SK-N-SH (cell line): ENCODE measurements at regions of chr9 and their contacts with region 1.

Region 1: DNA sequence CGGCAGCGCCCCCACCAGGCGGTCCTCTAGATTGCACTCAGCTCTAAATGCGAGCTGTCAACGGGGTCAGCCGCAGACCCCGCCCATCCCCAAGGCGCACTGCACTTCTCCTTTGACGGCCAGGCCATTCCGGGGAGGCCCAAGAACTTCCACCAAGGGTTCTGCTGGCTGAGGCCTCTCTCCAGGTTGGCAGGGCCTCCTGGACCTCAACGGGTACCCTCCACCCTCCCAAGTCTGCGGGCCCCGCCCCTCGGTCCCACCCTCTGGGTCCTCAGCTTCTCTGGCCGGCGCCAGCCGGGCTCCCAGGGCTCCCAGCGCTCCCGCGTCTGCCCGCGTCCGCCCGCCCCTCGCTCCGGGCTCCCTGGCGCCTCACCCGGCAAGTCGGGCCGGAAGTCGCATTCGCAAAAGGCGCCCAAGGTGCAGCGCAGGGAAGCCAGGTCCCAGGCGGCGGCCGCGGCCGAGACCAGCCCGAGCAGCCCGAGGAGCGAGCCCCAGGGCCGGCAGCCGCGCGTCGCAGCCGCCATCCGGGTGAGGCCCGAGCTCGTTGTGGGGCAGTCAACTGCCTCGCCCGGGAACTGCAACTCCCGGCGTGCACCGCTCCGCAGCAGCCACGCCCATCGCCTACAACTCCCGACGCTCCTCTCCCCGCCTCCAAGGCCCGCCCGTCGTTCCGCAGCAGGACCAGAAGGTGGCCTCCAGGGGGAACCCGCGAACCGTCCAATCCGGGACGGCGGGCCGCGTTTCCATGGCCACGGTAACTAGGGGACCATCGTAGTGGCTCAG is at the start of gene TOR2A:
- DNase-seq: peak; percentile 98
- H3K4me3 ChIP-seq: peak within 1 kb of the TSS; percentile 79
- H3K27ac ChIP-seq: peak within 1 kb of the TSS; percentile 62 to 93
- H3K4me1 ChIP-seq: peaks cover 5 to 11% of the 10 kb centered on the region in 2 experiments; a peak in 1 of 4 replicates
- H3K27me3 ChIP-seq: no peaks in the 10 kb centered on the region
- CTCF ChIP-seq: peak; percentile 95
- EP300 ChIP-seq: peak in 1 of 2 experiments; percentile 47; a peak in 1 of 4 replicates
- RAD21 ChIP-seq: peak; percentile 97
- polyA plus RNA-seq, gene TOR2A: 11.9 and 17.2 TPM in 2 replicates

Region 2: GRCh38 chr9:127423934-127424675 is 310.8 kb before region 1 on chr9 and contains the start of gene ZNF79:
- CTCF ChIA-PET with region 1: no interaction called
- POLR2A ChIA-PET with region 1: no interaction called
- DNase-seq: peak; percentile 95
- H3K4me3 ChIP-seq: peak within 1 kb of the TSS; percentile 90 to 97
- H3K27ac ChIP-seq: peak within 1 kb of the TSS; percentile 82 to 98
- H3K4me1 ChIP-seq: peaks cover 7 to 18% of the 10 kb centered on the region in 2 experiments; a peak in 3 of 4 replicates
- H3K27me3 ChIP-seq: no peaks in the 10 kb centered on the region
- CTCF ChIP-seq: no peak
- EP300 ChIP-seq: no peak
- RAD21 ChIP-seq: no peak; the same call in 1 of the 2 replicates
- polyA plus RNA-seq, gene ZNF79: 4.6 and 5.9 TPM in 2 replicates

Region 3: DNA sequence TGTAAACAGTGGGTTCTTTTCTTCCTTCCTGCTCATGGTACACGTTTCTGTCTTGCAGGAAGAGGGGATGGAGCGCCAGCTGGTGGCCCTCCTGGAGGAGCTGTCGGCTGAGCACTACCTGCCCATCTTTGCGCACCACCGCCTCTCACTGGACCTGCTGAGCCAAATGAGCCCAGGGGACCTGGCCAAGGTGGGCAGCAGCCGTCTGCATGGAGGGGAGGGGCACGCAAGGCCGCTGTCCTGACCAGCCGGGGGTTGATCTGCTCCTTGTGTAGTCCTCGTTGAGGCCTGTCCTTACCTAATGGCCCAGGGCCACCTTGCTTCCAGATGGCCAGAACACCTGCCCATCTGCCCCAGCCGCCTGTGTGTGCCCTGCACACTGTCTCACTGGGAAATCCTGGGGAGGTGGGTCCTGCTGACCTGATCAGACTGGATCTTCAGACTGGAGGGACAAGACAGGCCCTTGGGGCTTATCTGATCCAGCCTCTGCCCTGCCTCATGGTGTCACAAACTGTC is 239.0 kb before region 1 on chr9:
- CTCF ChIA-PET with region 1: interaction called, 12 read pairs
- POLR2A ChIA-PET with region 1: no interaction called
- DNase-seq: no peak
- H3K4me3 ChIP-seq: no peak overlapping the region
- H3K27ac ChIP-seq: peak overlapping the region; percentile 68 to 75
- H3K4me1 ChIP-seq: peaks cover 11 to 26% of the 10 kb centered on the region in 2 experiments; a peak in 2 of 4 replicates
- H3K27me3 ChIP-seq: no peaks in the 10 kb centered on the region
- CTCF ChIP-seq: no peak
- EP300 ChIP-seq: no peak
- RAD21 ChIP-seq: peak; percentile 11; the same call in 1 of the 2 replicates

Region 4: GRCh38 chr9:127586537-127586936 is 148.4 kb before region 1 on chr9:
- CTCF ChIA-PET with region 1: interaction called, 226 read pairs
- POLR2A ChIA-PET with region 1: interaction called, 6 read pairs
- DNase-seq: peak; percentile 87
- H3K4me3 ChIP-seq: no peak overlapping the region; a peak in 1 of 4 replicates
- H3K27ac ChIP-seq: no peak overlapping the region
- H3K4me1 ChIP-seq: no peaks in the 10 kb centered on the region; a peak in 1 of 4 replicates
- H3K27me3 ChIP-seq: no peaks in the 10 kb centered on the region
- CTCF ChIP-seq: peak; percentile 87
- EP300 ChIP-seq: no peak
- RAD21 ChIP-seq: peak; percentile 93

Region 5: DNA sequence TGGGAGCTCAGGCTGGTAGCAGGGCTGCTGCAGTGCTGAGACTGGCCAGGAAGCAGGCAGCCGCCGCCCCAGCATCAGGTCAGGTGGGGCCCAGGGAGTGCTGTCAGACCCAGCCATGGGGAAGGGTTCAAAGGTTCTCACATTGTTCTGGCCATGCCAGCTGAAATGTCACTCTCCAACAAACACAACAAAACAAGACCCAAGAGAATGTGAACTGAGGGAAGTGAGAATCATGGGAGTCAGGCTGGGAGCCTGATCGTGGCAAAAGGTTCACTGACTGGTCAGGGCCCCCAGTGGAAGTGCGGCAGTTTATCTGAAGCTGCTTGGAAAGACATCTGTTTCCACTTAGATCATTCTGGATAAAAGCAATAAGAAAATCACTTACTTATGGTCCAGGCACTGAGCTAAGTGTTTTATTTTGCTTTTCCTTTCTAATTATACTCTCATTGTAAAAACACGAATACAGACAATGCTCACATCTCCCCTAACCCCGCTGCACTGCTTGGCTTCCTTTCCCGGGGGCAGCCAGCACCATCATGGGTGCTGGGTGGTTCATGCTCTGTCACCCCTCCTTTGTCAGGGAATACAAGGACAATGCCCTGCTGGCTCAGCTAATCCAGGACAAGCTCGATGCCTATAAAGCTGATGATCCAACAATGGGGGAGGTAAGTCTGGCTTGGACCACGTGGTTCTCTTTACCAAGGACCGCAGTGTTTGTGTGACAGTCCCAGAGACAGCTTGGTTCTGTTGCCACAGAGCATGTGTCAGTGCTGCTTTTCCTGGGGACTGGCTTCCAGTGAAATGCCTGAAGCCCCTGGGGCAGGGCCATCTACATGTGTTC is 70.1 kb before region 1 on chr9:
- CTCF ChIA-PET with region 1: interaction called, 22 read pairs
- POLR2A ChIA-PET with region 1: interaction called, 7 read pairs
- DNase-seq: peak; percentile 76
- H3K4me3 ChIP-seq: no peak overlapping the region
- H3K27ac ChIP-seq: peak overlapping the region; percentile 52 to 97; a peak in 3 of 4 replicates
- H3K4me1 ChIP-seq: peaks cover 0 to 64% of the 10 kb centered on the region in 2 experiments; a peak in 2 of 4 replicates
- H3K27me3 ChIP-seq: no peaks in the 10 kb centered on the region
- CTCF ChIP-seq: no peak
- EP300 ChIP-seq: peak in 1 of 2 experiments; percentile 74; a peak in 2 of 4 replicates
- RAD21 ChIP-seq: no peak; the same call in 1 of the 2 replicates

Region 6: GRCh38 chr9:127754099-127755050 is 19.4 kb after region 1 on chr9:
- CTCF ChIA-PET with region 1: interaction called, 28 read pairs
- POLR2A ChIA-PET with region 1: interaction called, 3 read pairs
- DNase-seq: peak; percentile 95
- H3K4me3 ChIP-seq: peak overlapping the region; percentile 43 to 54; a peak in 2 of 4 replicates
- H3K27ac ChIP-seq: peak overlapping the region in 1 of 2 experiments; percentile 72; a peak in 2 of 4 replicates
- H3K4me1 ChIP-seq: peaks cover 0 to 20% of the 10 kb centered on the region in 2 experiments; a peak in 1 of 4 replicates
- H3K27me3 ChIP-seq: peaks cover 20% of the 10 kb centered on the region
- CTCF ChIP-seq: no peak
- EP300 ChIP-seq: no peak
- RAD21 ChIP-seq: no peak

Region 7: GRCh38 chr9:127785023-127785932 is 50.3 kb after region 1 on chr9:
- CTCF ChIA-PET with region 1: interaction called, 38 read pairs
- POLR2A ChIA-PET with region 1: interaction called, 8 read pairs
- DNase-seq: peak; percentile 97
- H3K4me3 ChIP-seq: peak overlapping the region; percentile 82 to 90
- H3K27ac ChIP-seq: peak overlapping the region; percentile 47 to 92; a peak in 3 of 4 replicates
- H3K4me1 ChIP-seq: peaks cover 6 to 18% of the 10 kb centered on the region in 2 experiments
- H3K27me3 ChIP-seq: no peaks in the 10 kb centered on the region
- CTCF ChIP-seq: peak; percentile 79
- EP300 ChIP-seq: no peak
- RAD21 ChIP-seq: peak; percentile 80

Region 8: DNA sequence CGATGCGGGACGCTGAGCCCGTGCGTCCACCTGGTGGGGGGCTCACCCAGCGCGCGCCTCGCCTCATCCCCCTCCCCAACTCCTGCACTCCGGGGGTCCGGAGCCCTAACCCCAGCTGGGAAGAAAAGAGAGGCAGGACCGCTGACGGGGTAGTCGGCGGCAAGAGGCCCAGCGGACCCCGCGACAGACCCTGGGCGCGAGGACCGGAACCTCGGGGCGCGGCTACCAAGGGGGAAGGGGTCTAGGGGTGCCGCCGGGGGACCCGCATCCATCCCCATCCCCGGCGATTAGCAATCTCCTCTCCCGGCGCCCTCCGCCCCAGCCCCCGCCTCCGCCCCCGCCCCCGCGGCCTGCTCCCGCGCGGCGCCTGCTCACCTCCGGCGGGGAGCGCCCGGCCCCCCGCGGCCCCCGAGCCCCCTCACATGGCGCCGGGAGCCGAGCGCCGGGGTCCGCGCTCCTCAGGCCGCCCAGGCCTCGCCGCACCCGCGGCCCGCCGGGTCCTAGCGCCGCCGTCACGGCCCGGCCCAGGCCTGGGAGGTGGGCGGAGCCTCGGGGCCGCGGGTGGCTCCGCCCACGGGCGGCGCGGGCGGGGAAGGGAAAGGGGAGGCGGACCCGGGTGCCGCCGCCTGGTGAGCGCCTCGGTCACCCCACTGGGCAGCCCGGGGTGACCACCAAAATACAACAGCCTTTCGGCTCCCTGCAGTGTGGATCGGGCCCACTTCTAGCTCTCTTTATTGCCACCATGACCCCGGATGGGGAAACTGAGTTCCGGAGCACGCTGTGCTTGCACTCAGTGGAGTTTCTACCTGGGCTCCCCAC is 164.4 kb after region 1 on chr9 and contains the start of gene ST6GALNAC6:
- CTCF ChIA-PET with region 1: interaction called, 11 read pairs
- POLR2A ChIA-PET with region 1: no interaction called
- DNase-seq: peak; percentile 98
- H3K4me3 ChIP-seq: peak within 1 kb of the TSS; percentile 88
- H3K27ac ChIP-seq: peak within 1 kb of the TSS; percentile 73 to 76
- H3K4me1 ChIP-seq: peaks cover 9 to 29% of the 10 kb centered on the region in 2 experiments; a peak in 2 of 4 replicates
- H3K27me3 ChIP-seq: no peaks in the 10 kb centered on the region
- CTCF ChIP-seq: no peak
- EP300 ChIP-seq: no peak
- RAD21 ChIP-seq: no peak
- polyA plus RNA-seq, gene ST6GALNAC6: 34.8 and 47.5 TPM in 2 replicates